ENCODE measurements at regions of chr7 and their contacts with region 1.

Region 1: DNA sequence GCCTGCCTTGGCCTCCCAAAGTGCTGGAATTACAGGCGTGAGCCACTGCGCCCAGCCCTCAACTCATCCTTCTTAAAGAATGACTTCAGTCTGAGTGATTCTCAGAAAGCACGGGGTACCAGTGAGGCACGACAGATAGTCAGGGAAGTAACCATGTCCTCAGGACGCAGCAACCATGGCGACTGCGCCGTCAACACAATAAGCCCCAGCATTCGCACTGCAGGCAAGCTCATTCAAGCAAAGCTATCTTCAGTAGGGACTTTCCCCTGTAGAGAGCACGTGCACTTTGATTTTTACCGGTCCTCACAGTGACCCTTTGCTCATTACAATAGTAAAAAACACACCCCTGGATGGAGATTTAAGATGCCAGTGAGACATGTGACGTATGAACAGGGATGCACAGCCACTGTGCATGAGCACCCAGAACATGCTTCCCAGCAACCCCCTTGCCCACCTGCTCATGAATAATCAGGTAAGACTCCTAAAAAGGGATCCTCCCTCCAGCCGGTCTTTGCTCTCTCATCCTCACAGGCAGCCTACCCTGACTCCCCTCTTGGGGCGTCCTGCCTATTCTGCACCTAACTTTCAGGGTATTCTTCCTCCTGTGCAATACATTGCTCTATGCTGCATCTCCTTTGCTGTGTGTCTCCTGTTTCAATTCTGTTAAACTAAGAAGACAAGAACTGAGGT is 9.1 kb downstream of the WDR86 start:
- DNase-seq: no peak
- H3K4me3 ChIP-seq: no peak overlapping the region
- H3K27ac ChIP-seq: no peak overlapping the region
- H3K4me1 ChIP-seq: peaks cover 0 to 14% (median 9%) of the 10 kb centered on the region in 4 experiments; a peak in 6 of 7 replicates
- H3K27me3 ChIP-seq: no peaks in the 10 kb centered on the region
- CTCF ChIP-seq: peak in 1 of 3 experiments; percentile 10; a peak in 1 of 4 replicates
- EP300 ChIP-seq: 0 out of 3 replicates have a peak, but pooled peaks of 1 of the 2 experiments have one; percentile 11
- POLR2A ChIP-seq: no peak
- RAD21 ChIP-seq: no peak

Region 2: GRCh38 chr7:151368136-151368571 is 32.6 kb before region 1 on chr7:
- CTCF ChIA-PET with region 1: interaction called, 10 read pairs
- POLR2A ChIA-PET with region 1: interaction called, 3 read pairs
- DNase-seq: peak; percentile 58 to 91
- H3K4me3 ChIP-seq: no peak overlapping the region
- H3K27ac ChIP-seq: no peak overlapping the region
- H3K4me1 ChIP-seq: peaks cover 0 to 7% (median 2%) of the 10 kb centered on the region in 4 experiments; a peak in 3 of 7 replicates
- H3K27me3 ChIP-seq: no peaks in the 10 kb centered on the region; a peak in 1 of 7 replicates
- CTCF ChIP-seq: peak; percentile 95 to 100 (median 95)
- EP300 ChIP-seq: no peak
- POLR2A ChIP-seq: no peak
- RAD21 ChIP-seq: peak; percentile 86 to 90

Region 3: DNA sequence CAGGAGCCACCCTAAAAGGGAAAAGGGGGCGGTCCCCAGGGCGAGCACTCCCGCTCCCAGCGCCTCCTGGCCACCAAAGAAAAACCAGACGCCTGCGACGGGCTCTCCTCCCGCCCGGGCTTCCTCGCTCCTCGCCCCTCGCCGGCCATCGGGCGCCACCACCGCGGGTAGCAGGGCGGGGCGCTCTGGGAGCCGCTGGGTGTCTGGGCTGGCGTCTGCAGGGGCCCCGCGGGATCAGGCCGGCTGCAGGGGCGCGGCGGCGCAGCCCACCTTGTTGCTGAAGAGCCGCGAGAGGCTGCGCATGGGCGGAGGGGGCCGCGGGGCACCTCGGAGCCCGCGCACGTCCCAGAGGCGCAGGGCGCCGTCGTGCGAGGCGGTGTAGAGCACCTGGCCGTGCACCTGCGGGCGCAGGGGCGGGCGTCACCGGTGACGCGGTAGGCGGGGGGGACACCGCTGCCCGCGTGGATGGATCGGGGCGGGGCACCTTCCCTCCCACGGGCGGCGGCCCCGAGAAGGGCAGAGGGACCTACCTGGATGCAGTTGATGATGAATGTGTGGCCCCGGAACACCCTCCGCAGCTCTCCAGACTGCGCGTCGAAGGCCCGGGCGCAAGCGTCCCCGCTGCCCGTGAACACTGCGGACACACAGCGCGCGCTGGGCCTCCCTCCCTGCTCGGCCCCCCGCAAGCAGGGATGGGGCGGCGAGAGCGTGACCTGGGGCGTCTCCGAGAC is 19.3 kb before region 1 on chr7:
- CTCF ChIA-PET with region 1: interaction called, 16 read pairs
- POLR2A ChIA-PET with region 1: interaction called, 3 read pairs
- DNase-seq: peak in 1 of 2 experiments; percentile 84
- H3K4me3 ChIP-seq: peak overlapping the region; percentile 25 to 57 (median 38)
- H3K27ac ChIP-seq: no peak overlapping the region
- H3K4me1 ChIP-seq: peaks cover 0 to 30% (median 8%) of the 10 kb centered on the region in 4 experiments; a peak in 6 of 7 replicates
- H3K27me3 ChIP-seq: peaks cover 8 to 27% (median 22%) of the 10 kb centered on the region in 4 experiments
- CTCF ChIP-seq: no peak
- EP300 ChIP-seq: no peak
- POLR2A ChIP-seq: no peak
- RAD21 ChIP-seq: no peak; a peak in 1 of 4 replicates

Region 4: DNA sequence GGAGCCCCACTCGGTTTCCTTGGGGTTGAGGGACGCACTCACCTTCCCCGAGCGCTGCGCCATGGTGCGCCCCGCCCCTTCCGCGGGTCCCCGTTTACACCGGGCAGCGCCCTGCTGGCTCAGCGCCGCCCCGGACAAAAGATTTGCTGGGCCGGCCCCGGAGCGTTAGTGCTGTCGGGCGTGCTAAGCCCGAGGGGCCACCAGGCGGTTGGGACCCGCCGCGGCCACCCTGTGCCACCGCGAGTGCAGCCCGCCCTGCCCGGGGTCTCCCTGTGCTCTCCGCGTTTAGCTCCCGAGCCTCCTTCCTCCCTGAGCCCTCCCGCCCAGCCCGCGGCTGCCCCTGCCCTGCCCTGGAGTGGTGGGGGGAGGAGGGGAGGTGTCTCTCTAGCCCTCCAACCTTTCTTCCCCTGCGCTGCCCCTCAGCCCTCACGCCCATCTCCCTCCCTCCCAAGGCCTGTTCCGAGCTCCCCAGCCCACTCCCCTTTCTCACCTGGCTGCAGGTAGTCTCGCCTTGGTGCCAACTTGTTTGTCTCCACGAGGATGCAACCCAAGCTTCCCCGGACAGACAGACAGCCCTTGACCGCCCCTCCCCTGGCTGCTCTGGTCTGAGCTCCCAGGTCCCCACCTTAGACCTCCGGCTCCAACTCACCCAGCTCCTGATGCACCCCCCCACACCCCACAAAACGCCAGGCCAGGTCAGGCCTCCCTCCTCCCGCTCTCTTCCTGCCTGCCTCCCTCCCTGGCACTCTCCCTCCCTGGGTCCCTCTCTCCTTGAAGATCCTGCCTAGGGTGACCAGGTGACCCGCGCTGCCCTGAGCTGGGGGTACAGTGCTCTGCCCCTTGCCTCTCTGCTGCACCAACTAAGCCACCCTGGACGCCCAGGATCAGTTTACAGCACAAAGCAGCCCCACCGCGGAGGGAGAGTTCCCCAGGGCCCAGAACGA is 39.4 kb after region 1 on chr7 and contains the start of gene CRYGN:
- CTCF ChIA-PET with region 1: interaction called, 12 read pairs
- POLR2A ChIA-PET with region 1: interaction called, 4 read pairs
- DNase-seq: peak in 1 of 2 experiments; percentile 79
- H3K4me3 ChIP-seq: peak within 1 kb of the TSS; percentile 37 to 66 (median 57)
- H3K27ac ChIP-seq: no peak within 1 kb of the TSS; the same call in 1 of the 2 replicates
- H3K4me1 ChIP-seq: peaks cover 0 to 17% (median 6%) of the 10 kb centered on the region in 4 experiments; a peak in 6 of 7 replicates
- H3K27me3 ChIP-seq: peaks cover 0 to 7% (median 6%) of the 10 kb centered on the region in 4 experiments; a peak in 4 of 7 replicates
- CTCF ChIP-seq: no peak
- EP300 ChIP-seq: no peak
- POLR2A ChIP-seq: no peak
- RAD21 ChIP-seq: no peak
- total RNA-seq, gene CRYGN: 1.0 and 1.6 TPM in 2 replicates

Measured in H1 (cell line).